Activated CD4-positive, alpha-beta T cell treated with anti-CD3 and anti-CD28 coated beads for 36 hours (primary cell): ENCODE measurements at regions of chr6 and their contacts with region 1.

Region 1: DNA sequence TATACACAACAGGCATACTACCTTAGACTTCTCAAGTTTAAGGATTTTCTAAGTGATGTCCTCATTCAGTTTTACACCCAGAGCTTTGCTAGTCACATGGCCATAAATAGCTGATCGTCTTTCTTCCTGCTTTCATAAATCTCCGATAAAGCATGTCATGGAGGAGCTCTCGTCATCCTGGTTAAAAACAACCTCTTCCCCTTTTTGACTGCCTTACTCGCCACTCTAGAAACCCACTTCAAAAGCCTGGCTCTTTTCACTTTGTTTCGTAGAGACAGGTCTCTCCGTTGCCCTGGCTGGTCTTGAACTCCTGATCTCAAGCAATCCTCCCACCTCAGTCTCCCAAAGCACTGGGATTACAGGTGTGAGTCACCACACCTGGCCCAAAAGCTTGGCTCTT is 67.0 kb upstream of the SMIM29 start:
- DNase-seq: peak; percentile 26
- ATAC-seq: peak; percentile 60
- H3K4me3 Mint-ChIP-seq: peak overlapping the region; percentile 47
- H3K27ac Mint-ChIP-seq: peak overlapping the region; percentile 81
- H3K4me1 Mint-ChIP-seq: peaks cover 46% of the 10 kb centered on the region
- H3K27me3 Mint-ChIP-seq: no peaks in the 10 kb centered on the region

Region 2: DNA sequence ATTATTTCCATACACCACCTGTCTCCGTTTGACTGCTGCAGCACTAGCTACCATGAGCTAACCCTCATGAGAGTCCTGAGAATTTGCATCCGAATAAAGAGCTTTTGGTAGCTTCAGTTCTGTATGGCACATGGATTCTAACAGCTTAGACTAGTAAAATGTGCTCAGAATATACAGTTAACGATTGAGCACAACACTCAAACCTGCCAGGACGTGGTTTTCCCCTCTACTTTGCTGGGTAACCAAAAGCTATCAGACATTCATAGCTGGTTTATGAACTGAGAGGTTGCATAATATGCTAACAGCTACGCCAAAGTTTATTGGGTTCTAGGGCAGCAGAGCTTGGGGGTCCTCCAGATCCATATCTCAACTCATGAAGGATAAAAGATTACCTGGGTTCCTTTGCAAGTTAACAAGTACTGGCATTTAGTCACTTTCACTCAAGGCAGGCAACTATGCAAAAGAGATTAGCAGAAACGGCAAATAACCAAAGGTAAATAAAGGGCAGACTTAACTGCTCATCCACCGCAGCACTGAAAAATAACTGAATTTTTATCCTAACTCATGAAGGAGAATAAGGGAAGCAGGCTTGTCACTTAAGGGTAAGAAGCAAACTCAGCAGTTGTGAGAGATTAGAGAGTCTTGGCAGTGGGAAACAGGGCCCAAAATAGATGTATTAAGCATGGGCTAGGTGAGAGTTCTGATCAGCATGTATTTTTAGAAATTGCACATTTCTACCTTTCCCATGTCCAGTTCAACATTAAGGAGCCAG is 47.3 kb after region 1 on chr6:
- CTCF ChIA-PET with region 1: interaction called, 4 read pairs
- POLR2A ChIA-PET with region 1: no interaction called
- intact Hi-C with region 1: loop called in 1 of 2 experiments (anchors 5 kb)
- DNase-seq: peak; percentile 13
- ATAC-seq: peak; percentile 47
- H3K4me3 Mint-ChIP-seq: no peak overlapping the region
- H3K27ac Mint-ChIP-seq: no peak overlapping the region
- H3K4me1 Mint-ChIP-seq: peaks cover 38% of the 10 kb centered on the region
- H3K27me3 Mint-ChIP-seq: no peaks in the 10 kb centered on the region